ENCODE measurements at regions of chr15 and their contacts with region 1.

Region 1: DNA sequence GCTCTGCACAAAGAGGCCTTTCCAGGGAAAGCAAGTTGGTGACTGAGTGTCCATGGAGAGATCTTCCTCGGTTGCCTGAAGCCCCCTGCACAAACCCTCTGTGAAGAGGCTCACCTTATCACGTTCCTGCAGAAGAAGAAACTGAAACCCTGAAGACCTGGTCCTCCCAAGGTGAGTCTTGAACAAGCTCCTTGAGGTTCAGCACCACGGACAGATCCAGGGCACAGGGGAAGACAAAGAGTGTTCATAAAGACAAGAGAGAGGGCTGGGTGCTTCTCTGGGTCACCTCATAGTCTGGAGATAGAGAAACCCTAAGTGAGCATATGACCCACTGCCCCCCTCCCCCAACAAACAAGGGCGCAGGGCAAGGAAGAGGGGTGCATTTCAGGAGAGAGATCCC is 21.7 kb upstream of the TBC1D21 start:
- DNase-seq: peak; percentile 34 to 77 (median 56)
- ATAC-seq: no peak
- H3K4me3 ChIP-seq: no peak overlapping the region
- H3K27ac ChIP-seq: no peak overlapping the region
- H3K4me1 ChIP-seq: peaks cover 2% of the 10 kb centered on the region
- H3K27me3 ChIP-seq: no peaks in the 10 kb centered on the region

Region 2: GRCh38 chr15:73753250-73754130 is 98.2 kb before region 1 on chr15 and contains the start of gene INSYN1:
- intact Hi-C with region 1: loop called in 1 of 4 experiments (anchors 10 kb)
- DNase-seq: peak; percentile 68 to 90 (median 89)
- ATAC-seq: peak; percentile 66 to 69
- H3K4me3 ChIP-seq: peak within 1 kb of the TSS; percentile 88
- H3K27ac ChIP-seq: no peak within 1 kb of the TSS
- H3K4me1 ChIP-seq: peaks cover 4% of the 10 kb centered on the region
- H3K27me3 ChIP-seq: no peaks in the 10 kb centered on the region
- total RNA-seq, gene INSYN1: 65.6 to 112 (median 99.0) TPM

Measured in right cardiac atrium (tissue), 5 donors.